Thyroid gland (tissue), 4 donors: ENCODE measurements at regions of chr6 and their contacts with region 1.

Region 1: DNA sequence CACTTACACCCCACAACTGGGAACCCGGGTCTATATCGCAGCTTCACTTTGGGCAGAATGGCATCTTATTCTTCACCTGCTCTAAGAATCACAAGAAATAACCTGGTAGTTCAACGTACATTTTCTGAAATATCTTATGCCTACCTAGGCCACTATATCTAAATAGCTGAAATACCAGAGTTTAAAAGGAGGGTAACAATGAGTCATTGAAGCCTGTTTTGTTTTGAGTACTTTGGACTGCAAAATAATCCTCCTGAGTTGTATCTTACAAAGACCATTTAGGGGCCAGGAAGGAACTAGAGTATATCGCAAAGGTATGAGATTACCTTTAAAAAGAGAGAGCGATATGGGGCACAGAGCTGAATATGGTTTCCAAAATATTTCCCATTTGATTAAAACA is 96.7 kb upstream of the NUP153 start:
- DNase-seq: no peak
- H3K4me3 ChIP-seq: no peak overlapping the region
- H3K27ac ChIP-seq: no peak overlapping the region
- H3K4me1 ChIP-seq: no peaks in the 10 kb centered on the region
- H3K27me3 ChIP-seq: no peaks in the 10 kb centered on the region
- CTCF ChIP-seq: no peak
- POLR2A ChIP-seq: no peak

Region 2: GRCh38 chr6:17156112-17156921 is 647.1 kb before region 1 on chr6:
- intact Hi-C with region 1: loop called (anchors 5 kb)
- DNase-seq: peak; percentile 75 to 82
- H3K4me3 ChIP-seq: no peak overlapping the region
- H3K27ac ChIP-seq: no peak overlapping the region
- H3K4me1 ChIP-seq: peaks cover 0 to 3% of the 10 kb centered on the region in 2 donors
- H3K27me3 ChIP-seq: no peaks in the 10 kb centered on the region
- CTCF ChIP-seq: peak; percentile 32 to 89 (median 79)
- POLR2A ChIP-seq: no peak

Region 3: DNA sequence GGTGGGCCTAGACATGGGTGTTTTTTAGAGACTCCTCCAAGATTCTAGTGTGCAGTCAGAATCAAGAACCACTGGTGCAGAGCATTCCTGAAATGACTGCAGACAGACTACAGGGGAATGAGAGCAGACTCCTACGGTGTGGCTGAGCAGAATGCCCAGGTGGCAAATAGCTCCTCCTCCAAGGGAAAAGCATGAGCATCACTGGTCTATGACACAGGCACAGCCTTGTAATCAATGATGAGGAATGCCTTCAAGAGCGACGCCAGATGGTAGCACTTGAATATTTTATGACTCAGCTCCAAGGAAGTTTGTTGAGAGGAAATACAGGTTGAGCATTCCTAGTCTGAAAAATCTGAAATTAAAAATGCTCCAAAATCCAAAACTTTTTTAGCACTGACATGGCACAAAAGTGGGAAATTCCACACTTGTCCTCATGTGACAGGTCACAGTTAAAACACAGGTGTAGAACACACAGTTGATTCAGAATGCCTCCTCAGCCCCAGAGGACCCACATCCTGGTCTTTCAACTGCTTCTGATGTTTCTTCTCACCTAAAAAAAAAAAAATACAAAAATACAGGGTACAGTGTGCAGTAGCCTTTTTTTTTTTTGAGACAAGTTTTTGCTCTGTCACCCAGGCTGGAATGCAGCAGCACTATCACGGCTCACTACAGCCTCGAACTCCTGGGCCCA is 213.9 kb before region 1 on chr6:
- intact Hi-C with region 1: loop called (anchors 5 kb)
- DNase-seq: peak; percentile 80 to 81
- H3K4me3 ChIP-seq: no peak overlapping the region
- H3K27ac ChIP-seq: peak overlapping the region; percentile 40 to 61 (median 48)
- H3K4me1 ChIP-seq: no peaks in the 10 kb centered on the region
- H3K27me3 ChIP-seq: no peaks in the 10 kb centered on the region
- CTCF ChIP-seq: peak in 4 of 6 experiments; percentile 2 to 36 (median 24)
- POLR2A ChIP-seq: peak in 1 of 2 donors; percentile 52